Ascending aorta (tissue), 2 donors: ENCODE measurements at regions of chr9 and their contacts with region 1.

Region 1: DNA sequence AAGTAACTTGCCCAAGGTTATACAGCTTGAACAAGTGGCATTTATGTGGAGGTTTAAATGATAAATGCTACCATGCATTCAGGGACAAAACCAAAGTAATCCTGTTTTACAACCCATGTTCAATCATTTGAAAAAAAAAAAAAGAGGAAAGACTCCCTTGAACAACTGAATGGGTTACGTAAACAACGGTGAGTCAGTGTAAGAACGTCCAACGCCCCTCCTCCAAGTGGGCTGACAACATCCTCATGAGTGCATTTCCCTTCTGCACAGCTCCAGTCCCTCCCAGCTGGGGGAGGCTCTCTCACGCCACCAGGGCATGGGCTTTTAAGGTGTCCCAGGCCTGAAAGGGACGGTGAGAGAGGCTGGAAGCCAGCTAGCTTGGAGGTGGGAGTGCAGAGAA is 90.0 kb downstream of the PRRT1B start:
- DNase-seq: peak; percentile 83 to 96
- H3K4me3 ChIP-seq: no peak overlapping the region
- H3K27ac ChIP-seq: peak overlapping the region; percentile 83
- H3K4me1 ChIP-seq: peaks cover 0 to 14% of the 10 kb centered on the region in 2 donors
- H3K27me3 ChIP-seq: no peaks in the 10 kb centered on the region
- CTCF ChIP-seq: no peak

Region 2: GRCh38 chr9:131567910-131568309 is 67.4 kb before region 1 on chr9:
- intact Hi-C with region 1: no loop called
- DNase-seq: no peak
- H3K4me3 ChIP-seq: no peak overlapping the region
- H3K27ac ChIP-seq: no peak overlapping the region
- H3K4me1 ChIP-seq: no peaks in the 10 kb centered on the region
- H3K27me3 ChIP-seq: no peaks in the 10 kb centered on the region
- CTCF ChIP-seq: no peak

Region 3: GRCh38 chr9:131590908-131591844 is 44.1 kb before region 1 on chr9:
- intact Hi-C with region 1: loop called (anchors 5 kb)
- DNase-seq: peak; percentile 37 to 88
- H3K4me3 ChIP-seq: no peak overlapping the region
- H3K27ac ChIP-seq: no peak overlapping the region
- H3K4me1 ChIP-seq: no peaks in the 10 kb centered on the region
- H3K27me3 ChIP-seq: no peaks in the 10 kb centered on the region
- CTCF ChIP-seq: peak; percentile 70 to 91 (median 82)

Region 4: GRCh38 chr9:131608493-131609037 is 26.7 kb before region 1 on chr9:
- intact Hi-C with region 1: loop called (anchors 2 kb)
- DNase-seq: peak; percentile 36 to 92
- H3K4me3 ChIP-seq: peak overlapping the region in 1 of 2 donors; percentile 49
- H3K27ac ChIP-seq: peak overlapping the region; percentile 76 to 91
- H3K4me1 ChIP-seq: peaks cover 12 to 43% of the 10 kb centered on the region in 2 donors
- H3K27me3 ChIP-seq: no peaks in the 10 kb centered on the region
- CTCF ChIP-seq: no peak

Region 5: DNA sequence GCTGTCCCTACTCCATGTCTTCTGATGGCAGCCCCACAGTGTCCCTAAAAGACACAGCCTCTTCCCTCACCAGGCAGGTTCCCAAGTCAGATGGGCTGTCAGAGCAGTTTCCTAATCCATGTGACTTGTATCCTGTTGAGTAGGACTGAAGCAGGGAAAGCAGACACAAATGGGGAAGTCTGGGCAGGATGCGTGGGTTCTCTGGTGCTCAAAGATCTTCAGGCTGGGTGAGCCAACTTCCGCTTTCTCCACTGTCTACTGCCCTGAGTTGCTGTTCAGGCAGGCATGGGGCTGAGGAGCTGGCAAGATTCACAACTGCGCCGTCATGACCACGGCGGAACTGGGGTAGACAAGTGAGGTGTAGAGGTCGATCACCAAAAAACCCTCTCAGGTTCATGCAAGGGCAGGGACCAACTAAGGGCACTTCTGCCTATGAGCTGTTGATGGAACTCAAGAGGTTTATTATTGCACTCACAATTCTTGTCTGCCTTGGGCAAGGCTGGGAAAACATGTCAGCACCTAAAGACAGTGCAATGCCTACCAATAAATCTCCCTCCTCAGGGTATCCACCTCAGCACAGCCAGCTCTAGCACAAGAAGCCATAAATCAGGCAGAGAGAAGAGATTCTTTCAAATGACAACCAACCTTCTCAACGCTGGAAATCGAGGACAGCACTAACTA is 21.2 kb after region 1 on chr9:
- intact Hi-C with region 1: loop called (anchors 1 kb)
- DNase-seq: peak; percentile 72 to 87
- H3K4me3 ChIP-seq: no peak overlapping the region
- H3K27ac ChIP-seq: peak overlapping the region; percentile 16 to 47
- H3K4me1 ChIP-seq: peaks cover 0 to 29% of the 10 kb centered on the region in 2 donors
- H3K27me3 ChIP-seq: no peaks in the 10 kb centered on the region
- CTCF ChIP-seq: no peak

Region 6: GRCh38 chr9:131678499-131679111 is 43.3 kb after region 1 on chr9:
- intact Hi-C with region 1: loop called (anchors 2 kb)
- DNase-seq: peak; percentile 85 to 93
- H3K4me3 ChIP-seq: no peak overlapping the region
- H3K27ac ChIP-seq: peak overlapping the region; percentile 93 to 96
- H3K4me1 ChIP-seq: peaks cover 34 to 80% of the 10 kb centered on the region in 2 donors
- H3K27me3 ChIP-seq: no peaks in the 10 kb centered on the region
- CTCF ChIP-seq: no peak

Region 7: GRCh38 chr9:131839281-131840084 is 204.2 kb after region 1 on chr9:
- intact Hi-C with region 1: no loop called
- DNase-seq: no peak
- H3K4me3 ChIP-seq: no peak overlapping the region
- H3K27ac ChIP-seq: no peak overlapping the region
- H3K4me1 ChIP-seq: no peaks in the 10 kb centered on the region
- H3K27me3 ChIP-seq: no peaks in the 10 kb centered on the region
- CTCF ChIP-seq: no peak